Cardiac septum (tissue), 1 donor: ENCODE measurements at regions of chr1 and their contacts with region 1.

Region 1: DNA sequence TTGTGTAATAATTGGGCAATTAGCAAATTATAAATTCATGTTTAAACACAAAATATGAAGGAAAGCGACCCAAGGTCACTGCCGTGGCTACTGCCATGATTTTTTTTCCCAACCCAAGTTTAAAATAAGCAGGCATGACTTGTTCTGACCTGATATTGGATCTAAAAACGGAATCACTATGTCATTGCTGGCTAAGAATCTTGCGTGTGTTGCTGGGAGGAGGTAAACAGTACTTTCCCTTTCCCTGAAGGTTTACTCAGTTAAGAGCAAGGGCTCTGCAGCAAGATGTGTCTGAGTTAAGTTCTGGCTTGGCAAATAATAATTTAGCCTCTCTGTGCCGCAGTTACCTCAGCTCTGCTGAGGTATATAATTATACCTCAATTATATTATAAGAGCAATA is 125.7 kb upstream of the L1TD1 start:
- DNase-seq: no peak

Region 2: DNA sequence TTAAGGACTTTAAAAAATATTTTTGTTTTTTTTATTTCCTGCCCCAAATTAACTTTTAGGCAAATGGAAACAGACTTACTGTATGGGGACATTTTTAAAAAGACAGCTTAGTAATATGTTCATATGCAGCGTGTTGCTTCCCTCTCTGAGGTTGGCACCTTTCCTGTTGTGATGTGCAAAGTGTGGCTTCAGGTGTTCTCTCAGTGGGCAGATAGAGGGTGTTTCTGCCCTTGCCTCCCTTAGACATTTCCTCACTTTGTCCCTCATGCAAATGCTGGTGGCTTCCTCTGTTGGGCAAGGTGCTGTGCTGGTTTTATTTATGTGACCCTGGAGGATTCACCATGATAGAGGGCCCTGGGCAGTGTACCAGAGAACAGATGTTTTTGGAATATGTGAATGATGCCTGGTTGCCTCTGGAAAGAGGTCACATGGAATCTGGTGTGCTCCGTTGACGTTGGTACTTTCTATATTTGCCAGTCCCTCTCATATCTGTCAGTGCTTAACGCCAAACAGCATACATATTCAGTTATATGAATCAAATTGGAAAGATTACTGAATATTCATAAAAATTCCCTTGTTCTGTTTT is 203.2 kb before region 1 on chr1:
- intact Hi-C with region 1: loop called (anchors 5 kb)
- DNase-seq: no peak

Region 3: GRCh38 chr1:61887076-61887867 is 181.7 kb before region 1 on chr1:
- intact Hi-C with region 1: loop called (anchors 5 kb)
- DNase-seq: no peak

Region 4: GRCh38 chr1:61914823-61915482 is 154.0 kb before region 1 on chr1:
- intact Hi-C with region 1: no loop called
- DNase-seq: no peak

Region 5: GRCh38 chr1:61950418-61950817 is 118.6 kb before region 1 on chr1:
- intact Hi-C with region 1: loop called (anchors 2 kb)
- DNase-seq: no peak

Region 6: DNA sequence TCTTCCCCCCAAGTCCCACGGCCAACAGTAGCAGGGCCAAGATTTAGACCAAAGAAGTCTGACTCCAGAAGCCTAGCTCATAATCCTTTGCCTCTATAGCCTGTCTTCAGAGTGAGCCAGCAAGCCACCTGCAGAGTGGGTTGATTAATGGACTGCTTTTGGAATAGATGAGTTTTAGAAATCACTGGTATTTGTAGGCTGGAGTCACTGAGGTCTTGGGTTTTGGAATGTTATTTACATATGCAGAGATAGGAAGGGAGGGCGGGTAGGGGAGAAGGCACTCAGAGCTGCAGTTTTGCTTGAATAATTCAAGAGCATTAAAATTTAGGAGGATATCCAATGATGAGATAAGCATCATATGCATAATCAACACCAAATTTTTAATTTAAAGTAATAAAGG is 34.9 kb after region 1 on chr1:
- intact Hi-C with region 1: no loop called
- DNase-seq: no peak

Region 7: GRCh38 chr1:62637392-62638105 is 568.6 kb after region 1 on chr1:
- intact Hi-C with region 1: no loop called
- DNase-seq: no peak